Activated T-helper 1 cell treated with anti-CD3 and anti-CD28 coated beads, Interleukin-12 subunit alpha, Interleukin-12 subunit beta, Interleukin-2, Interleukin-4 antibody, amounts not matched to agents 30 ng/mL and 10 ng/mL and 1 ng/mL, durations not matched to agents 14 hours and 24 hours and 36 hours (primary cell): ENCODE measurements at regions of chr12 and their contacts with region 1.

Region 1: GRCh38 chr12:31959161-31959700 is at the start of gene RESF1:
- DNase-seq: peak; percentile 87
- H3K4me3 Mint-ChIP-seq: peak within 1 kb of the TSS; percentile 92
- H3K27ac Mint-ChIP-seq: peak within 1 kb of the TSS; percentile 95
- H3K4me1 Mint-ChIP-seq: peaks cover 73% of the 10 kb centered on the region
- H3K27me3 Mint-ChIP-seq: no peaks in the 10 kb centered on the region
- total RNA-seq, gene RESF1: 63.0 and 66.2 TPM in 2 replicates

Region 2: DNA sequence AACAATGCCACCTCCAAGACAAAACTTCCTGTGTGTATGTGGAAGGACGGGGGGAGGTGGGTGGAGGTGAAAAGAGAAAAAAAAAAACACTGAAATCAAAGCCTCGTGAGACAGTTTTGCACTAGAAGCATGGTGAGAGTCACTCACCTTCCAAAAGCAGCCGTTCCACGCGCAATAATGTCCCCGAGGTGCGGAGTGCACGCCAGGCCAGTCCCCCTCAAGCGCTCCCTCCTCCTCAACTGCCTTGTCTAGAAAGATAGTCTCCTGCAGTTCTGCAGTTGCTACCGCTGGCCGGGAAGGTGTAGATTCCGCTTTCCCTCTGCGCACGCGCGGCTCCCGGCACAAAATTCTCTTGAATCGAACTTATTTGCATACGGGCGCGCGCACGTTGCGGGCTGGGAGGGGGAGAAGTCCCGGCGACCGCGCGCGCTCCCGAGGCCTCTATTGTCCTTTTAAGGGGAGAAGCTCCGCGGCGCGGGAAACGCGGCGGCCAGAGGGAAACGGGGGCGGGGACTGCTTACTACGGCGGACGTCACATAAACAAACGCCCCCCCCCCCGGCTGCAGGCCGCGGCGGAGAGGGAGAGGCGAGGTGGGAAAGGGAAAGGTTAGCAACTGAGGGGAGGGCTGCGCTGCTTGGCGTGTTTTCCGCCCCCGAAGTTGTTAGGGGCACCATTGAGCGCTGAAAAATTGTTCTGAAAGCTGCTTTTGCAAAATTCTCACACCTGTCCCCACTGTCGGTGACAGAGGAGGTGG is 633.2 kb before region 1 on chr12 and contains the start of gene SINHCAF:
- intact Hi-C with region 1: loop called (anchors 5 kb)
- DNase-seq: peak; percentile 98
- H3K4me3 Mint-ChIP-seq: peak within 1 kb of the TSS; percentile 97
- H3K27ac Mint-ChIP-seq: peak within 1 kb of the TSS; percentile 95
- H3K4me1 Mint-ChIP-seq: peaks cover 41% of the 10 kb centered on the region
- H3K27me3 Mint-ChIP-seq: peaks cover 15% of the 10 kb centered on the region
- total RNA-seq, gene SINHCAF: 270 and 276 TPM in 2 replicates

Region 3: DNA sequence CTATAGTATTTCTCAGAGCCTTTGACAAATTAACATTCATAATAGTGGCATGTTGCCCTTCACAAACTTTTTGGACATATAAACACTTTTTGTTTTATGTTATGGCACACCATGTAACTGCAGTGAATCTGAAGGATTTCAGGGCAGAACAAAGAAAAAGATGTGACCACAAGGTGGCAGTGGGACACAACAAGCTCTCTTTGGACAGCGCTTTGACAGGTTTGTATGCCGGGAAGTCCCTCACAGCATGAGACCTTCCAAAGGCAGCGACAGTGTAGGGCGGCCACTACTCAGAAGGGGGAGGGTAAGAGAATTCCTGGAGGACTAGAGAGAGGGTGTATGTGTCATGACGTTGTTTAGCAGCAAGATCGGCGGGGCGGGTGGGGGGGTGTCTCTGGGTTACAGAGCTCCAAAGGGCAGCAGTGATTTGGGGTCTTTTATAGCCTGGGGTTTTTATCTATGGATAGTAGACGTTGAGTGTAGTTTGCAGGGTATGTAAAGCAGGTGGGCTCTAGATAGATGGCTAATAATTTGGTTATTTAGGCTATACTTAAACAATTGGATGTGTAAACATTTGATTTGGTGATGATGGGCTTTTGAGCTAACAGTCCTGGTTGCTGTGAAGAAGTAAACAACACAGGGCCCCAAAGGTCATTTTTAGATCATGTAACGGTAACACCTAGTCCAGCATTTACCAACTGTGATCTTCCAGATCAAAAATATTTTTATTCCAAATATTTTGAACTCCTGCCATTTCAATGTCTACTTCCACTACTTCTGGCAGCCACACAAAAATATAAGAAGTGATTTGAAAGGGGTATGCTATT is 276.9 kb before region 1 on chr12:
- intact Hi-C with region 1: loop called (anchors 1 kb)
- DNase-seq: peak; percentile 62
- H3K4me3 Mint-ChIP-seq: no peak overlapping the region
- H3K27ac Mint-ChIP-seq: peak overlapping the region; percentile 50
- H3K4me1 Mint-ChIP-seq: peaks cover 12% of the 10 kb centered on the region
- H3K27me3 Mint-ChIP-seq: no peaks in the 10 kb centered on the region

Region 4: GRCh38 chr12:31749024-31749704 is 210.1 kb before region 1 on chr12:
- intact Hi-C with region 1: loop called (anchors 2 kb)
- DNase-seq: peak; percentile 71
- H3K4me3 Mint-ChIP-seq: no peak overlapping the region
- H3K27ac Mint-ChIP-seq: peak overlapping the region; percentile 27
- H3K4me1 Mint-ChIP-seq: peaks cover 53% of the 10 kb centered on the region
- H3K27me3 Mint-ChIP-seq: no peaks in the 10 kb centered on the region

Region 5: GRCh38 chr12:31874961-31875608 is 84.1 kb before region 1 on chr12:
- intact Hi-C with region 1: loop called (anchors 1 kb)
- DNase-seq: peak; percentile 68
- H3K4me3 Mint-ChIP-seq: peak overlapping the region; percentile 80
- H3K27ac Mint-ChIP-seq: peak overlapping the region; percentile 100
- H3K4me1 Mint-ChIP-seq: peaks cover 30% of the 10 kb centered on the region
- H3K27me3 Mint-ChIP-seq: no peaks in the 10 kb centered on the region

Region 6: DNA sequence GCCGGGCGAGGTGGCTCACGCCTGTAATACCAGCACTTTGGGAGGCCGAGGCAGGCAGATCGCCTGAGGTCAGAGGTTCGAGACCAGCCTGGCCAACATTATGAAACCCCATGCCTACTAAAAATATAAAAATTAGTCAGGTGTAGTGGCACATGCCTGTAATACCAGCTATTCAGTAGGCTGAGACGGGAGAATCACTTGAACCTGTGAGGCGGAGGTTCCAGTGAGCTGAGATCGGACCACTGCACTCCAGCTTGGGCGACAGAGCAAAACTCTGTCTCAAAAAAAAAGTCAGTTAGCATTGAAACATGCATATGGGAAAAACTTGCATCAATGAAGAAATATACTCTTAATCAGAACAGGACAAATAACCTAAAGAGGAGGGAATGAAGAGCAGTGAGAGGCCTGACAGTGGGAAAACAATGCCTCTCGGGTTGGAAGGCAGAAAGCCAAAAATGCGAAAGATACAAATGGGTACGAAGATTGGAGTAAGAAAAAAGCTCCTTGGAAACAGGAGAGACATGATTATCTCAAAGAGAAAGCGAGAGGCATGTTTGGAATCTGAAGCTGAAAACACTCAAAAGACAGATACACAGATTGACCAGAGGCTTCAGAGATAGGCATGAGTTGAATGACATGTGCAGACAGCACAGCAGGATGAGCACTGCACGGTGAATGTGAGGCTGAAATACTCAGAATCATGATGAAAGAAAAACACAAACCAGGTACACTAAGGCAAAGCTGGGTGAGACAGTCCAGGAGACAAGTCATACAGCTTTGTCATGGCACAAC is 30.5 kb after region 1 on chr12:
- intact Hi-C with region 1: loop called (anchors 1 kb)
- DNase-seq: no peak
- H3K4me3 Mint-ChIP-seq: peak overlapping the region; percentile 54
- H3K27ac Mint-ChIP-seq: peak overlapping the region; percentile 81
- H3K4me1 Mint-ChIP-seq: peaks cover 63% of the 10 kb centered on the region
- H3K27me3 Mint-ChIP-seq: no peaks in the 10 kb centered on the region

Region 7: GRCh38 chr12:32062881-32063280 is 103.7 kb after region 1 on chr12:
- intact Hi-C with region 1: loop called (anchors 2 kb)
- DNase-seq: no peak
- H3K4me3 Mint-ChIP-seq: no peak overlapping the region
- H3K27ac Mint-ChIP-seq: no peak overlapping the region
- H3K4me1 Mint-ChIP-seq: no peaks in the 10 kb centered on the region
- H3K27me3 Mint-ChIP-seq: no peaks in the 10 kb centered on the region